ENCODE measurements at regions of chr3 and their contacts with region 1.

Region 1: DNA sequence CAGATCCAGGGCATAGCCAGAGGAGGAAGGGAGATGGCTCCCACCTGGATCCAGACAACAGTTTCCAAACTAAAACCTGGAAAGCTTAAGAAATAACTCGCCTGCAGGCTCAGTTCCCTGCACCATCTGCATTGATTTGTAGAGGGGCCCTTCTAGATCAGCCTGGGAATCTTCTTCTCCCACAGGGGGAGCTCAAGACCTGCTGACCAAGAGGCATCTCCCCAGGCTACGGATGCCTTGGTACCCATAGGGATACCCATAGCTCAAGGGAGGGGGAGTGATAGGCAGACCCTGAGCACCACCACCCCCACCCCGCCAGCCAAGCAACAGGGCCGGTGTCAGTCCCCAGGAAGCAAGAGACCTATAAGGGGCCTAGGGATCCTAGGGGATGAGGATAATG is 28.0 kb upstream of the DCLK3 start:
- DNase-seq: peak; percentile 30
- ATAC-seq: peak; percentile 94
- H3K4me3 ChIP-seq: no peak overlapping the region
- H3K27ac ChIP-seq: no peak overlapping the region
- H3K4me1 ChIP-seq: no peaks in the 10 kb centered on the region
- H3K27me3 ChIP-seq: no peaks in the 10 kb centered on the region
- CTCF ChIP-seq: peak; percentile 62
- EP300 ChIP-seq: no peak
- POLR2A ChIP-seq: no peak
- RAD21 ChIP-seq: 0 out of 2 replicates have a peak, but pooled peaks have one; percentile 25

Region 2: GRCh38 chr3:36777424-36778218 is 14.7 kb before region 1 on chr3:
- CTCF ChIA-PET with region 1: no interaction called
- POLR2A ChIA-PET with region 1: no interaction called
- in situ Hi-C with region 1: no loop called
- intact Hi-C with region 1: no loop called
- DNase-seq: no peak
- ATAC-seq: no peak
- H3K4me3 ChIP-seq: no peak overlapping the region
- H3K27ac ChIP-seq: no peak overlapping the region
- H3K4me1 ChIP-seq: peaks cover 11% of the 10 kb centered on the region; the same call in 1 of the 2 replicates
- H3K27me3 ChIP-seq: no peaks in the 10 kb centered on the region
- CTCF ChIP-seq: no peak
- EP300 ChIP-seq: no peak
- POLR2A ChIP-seq: no peak
- RAD21 ChIP-seq: no peak

Region 3: DNA sequence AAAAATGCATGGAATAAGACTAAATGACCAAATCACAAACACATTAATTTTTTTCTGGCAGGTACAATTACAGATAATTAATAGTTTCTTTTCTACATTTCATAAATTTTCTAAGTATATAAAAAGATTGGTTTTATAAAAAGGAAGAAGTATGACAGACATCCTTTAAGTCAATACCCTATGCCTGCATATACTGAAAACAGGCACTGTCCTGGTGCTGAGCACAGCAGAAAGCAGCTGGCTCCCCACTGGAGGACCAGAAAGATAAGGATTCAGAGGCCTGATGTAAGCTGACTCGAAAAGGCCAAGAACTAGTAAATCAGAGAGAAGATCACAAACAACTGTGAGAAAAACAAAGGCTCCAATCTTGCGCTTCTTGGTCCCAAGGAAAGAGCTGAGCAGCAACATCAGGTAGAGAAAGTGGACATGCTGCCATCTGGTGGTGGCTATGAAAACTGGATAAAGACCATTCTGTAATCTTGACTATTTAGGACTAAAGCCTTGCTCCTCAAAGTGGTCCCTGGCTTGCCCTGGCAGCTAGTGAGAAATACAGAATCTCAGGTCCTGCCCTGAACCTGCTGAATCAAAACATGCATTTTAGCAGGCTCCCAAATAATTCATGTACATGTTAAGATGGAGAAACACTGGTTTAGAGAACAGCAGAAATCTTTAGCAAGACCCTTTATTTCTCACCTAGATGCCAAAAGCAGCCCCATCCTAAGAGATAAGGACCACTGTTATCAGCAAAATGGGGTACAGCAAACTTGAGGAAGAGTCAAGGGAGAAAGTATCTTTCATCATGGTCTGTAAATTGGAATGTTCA is 76.5 kb after region 1 on chr3:
- CTCF ChIA-PET with region 1: interaction called, 9 read pairs
- POLR2A ChIA-PET with region 1: no interaction called
- in situ Hi-C with region 1: no loop called
- intact Hi-C with region 1: loop called (anchors 1 kb)
- DNase-seq: peak; percentile 17
- ATAC-seq: peak; percentile 90
- H3K4me3 ChIP-seq: no peak overlapping the region
- H3K27ac ChIP-seq: no peak overlapping the region
- H3K4me1 ChIP-seq: no peaks in the 10 kb centered on the region
- H3K27me3 ChIP-seq: no peaks in the 10 kb centered on the region; a peak in 1 of 5 replicates
- CTCF ChIP-seq: peak; percentile 82
- EP300 ChIP-seq: no peak
- POLR2A ChIP-seq: no peak
- RAD21 ChIP-seq: peak; percentile 43; the same call in 1 of the 2 replicates

Region 4: GRCh38 chr3:36957862-36958686 is 165.7 kb after region 1 on chr3:
- CTCF ChIA-PET with region 1: interaction called, 11 read pairs
- POLR2A ChIA-PET with region 1: no interaction called
- in situ Hi-C with region 1: no loop called
- intact Hi-C with region 1: loop called (anchors 1 kb)
- DNase-seq: no peak
- ATAC-seq: no peak
- H3K4me3 ChIP-seq: no peak overlapping the region
- H3K27ac ChIP-seq: no peak overlapping the region
- H3K4me1 ChIP-seq: peaks cover 10% of the 10 kb centered on the region; the same call in 1 of the 2 replicates
- H3K27me3 ChIP-seq: no peaks in the 10 kb centered on the region; a peak in 1 of 5 replicates
- CTCF ChIP-seq: no peak
- EP300 ChIP-seq: no peak
- POLR2A ChIP-seq: no peak
- RAD21 ChIP-seq: no peak

Region 5: GRCh38 chr3:37024092-37024491 is 231.8 kb after region 1 on chr3:
- CTCF ChIA-PET with region 1: no interaction called
- POLR2A ChIA-PET with region 1: no interaction called
- in situ Hi-C with region 1: no loop called
- intact Hi-C with region 1: loop called (anchors 5 kb)
- DNase-seq: no peak
- ATAC-seq: no peak
- H3K4me3 ChIP-seq: no peak overlapping the region
- H3K27ac ChIP-seq: no peak overlapping the region
- H3K4me1 ChIP-seq: no peaks in the 10 kb centered on the region
- H3K27me3 ChIP-seq: no peaks in the 10 kb centered on the region
- CTCF ChIP-seq: peak; percentile 19; the same call in 1 of the 2 replicates
- EP300 ChIP-seq: no peak
- POLR2A ChIP-seq: no peak
- RAD21 ChIP-seq: no peak

Region 6: GRCh38 chr3:37210230-37210629 is 417.9 kb after region 1 on chr3:
- CTCF ChIA-PET with region 1: no interaction called
- POLR2A ChIA-PET with region 1: no interaction called
- in situ Hi-C with region 1: no loop called
- intact Hi-C with region 1: loop called (anchors 2 kb)
- DNase-seq: no peak
- ATAC-seq: no peak
- H3K4me3 ChIP-seq: no peak overlapping the region
- H3K27ac ChIP-seq: no peak overlapping the region
- H3K4me1 ChIP-seq: peaks cover 14% of the 10 kb centered on the region
- H3K27me3 ChIP-seq: no peaks in the 10 kb centered on the region
- CTCF ChIP-seq: no peak
- EP300 ChIP-seq: no peak
- POLR2A ChIP-seq: no peak
- RAD21 ChIP-seq: no peak

Region 7: DNA sequence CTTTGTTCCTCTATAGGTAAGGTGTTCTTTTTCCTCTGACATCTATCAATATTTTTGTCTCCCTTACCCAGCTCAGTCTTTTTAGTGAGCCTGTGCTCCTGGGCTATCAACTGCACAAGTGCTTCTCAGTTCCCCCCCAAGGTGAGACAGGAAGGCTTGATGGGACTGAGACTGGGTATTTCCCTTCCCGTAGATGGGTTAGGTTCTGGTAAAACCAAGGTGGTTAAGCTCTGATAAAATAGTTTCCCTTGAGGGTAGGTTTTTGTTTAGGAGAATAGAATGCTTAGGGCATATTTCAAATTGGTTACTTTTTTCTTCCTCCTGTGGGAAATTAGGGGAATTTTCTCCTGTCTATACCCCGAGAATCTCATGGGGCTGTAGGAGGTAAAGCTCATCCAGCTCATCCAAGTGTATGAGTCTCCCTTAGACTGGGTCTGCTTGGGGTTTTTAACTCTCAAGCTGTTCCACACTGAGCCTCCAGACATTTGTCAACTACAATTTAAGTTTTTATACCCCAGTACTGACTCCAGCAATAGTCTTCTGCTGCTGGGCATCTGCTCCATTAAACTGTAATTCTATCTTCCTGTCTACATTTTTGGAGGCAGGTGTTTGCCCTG is 1417.9 kb after region 1 on chr3:
- CTCF ChIA-PET with region 1: no interaction called
- POLR2A ChIA-PET with region 1: no interaction called
- in situ Hi-C with region 1: no loop called
- intact Hi-C with region 1: no loop called
- DNase-seq: no peak
- ATAC-seq: no peak
- H3K4me3 ChIP-seq: no peak overlapping the region
- H3K27ac ChIP-seq: no peak overlapping the region
- H3K4me1 ChIP-seq: no peaks in the 10 kb centered on the region
- H3K27me3 ChIP-seq: no peaks in the 10 kb centered on the region
- CTCF ChIP-seq: no peak
- EP300 ChIP-seq: no peak
- POLR2A ChIP-seq: no peak
- RAD21 ChIP-seq: no peak